ENCODE measurements at regions of chr20 and their contacts with region 1.

Region 1: DNA sequence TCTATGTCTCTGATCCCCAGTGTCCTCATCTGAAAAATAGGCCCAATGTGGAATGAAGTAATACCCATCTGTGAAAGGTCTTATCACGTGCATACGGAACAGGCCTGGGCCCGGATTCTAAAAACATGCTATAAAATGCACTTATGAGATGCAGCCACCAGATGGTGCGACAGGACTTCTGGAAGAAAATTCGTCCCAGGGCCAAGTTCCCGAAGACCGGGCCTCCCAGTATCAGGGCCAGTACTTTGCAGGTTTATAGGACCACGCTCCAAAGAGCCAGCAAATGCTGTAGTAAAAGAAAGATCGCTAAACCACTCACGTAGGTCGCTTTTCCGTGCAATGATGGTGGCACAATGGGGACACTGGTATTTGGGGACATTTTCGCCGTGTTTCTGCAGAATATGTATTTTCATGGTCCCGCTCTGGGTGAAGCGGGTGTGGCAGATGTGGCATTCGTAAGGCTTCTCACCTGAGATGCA is 10.6 kb downstream of the CTCFL start:
- DNase-seq: peak; percentile 67
- H3K4me3 Mint-ChIP-seq: no peak overlapping the region
- H3K27ac Mint-ChIP-seq: no peak overlapping the region
- H3K4me1 Mint-ChIP-seq: no peaks in the 10 kb centered on the region
- H3K27me3 Mint-ChIP-seq: peaks cover 30% of the 10 kb centered on the region
- CTCF ChIP-seq: peak; percentile 79

Region 2: GRCh38 chr20:57582432-57583305 is 68.4 kb after region 1 on chr20:
- CTCF ChIA-PET with region 1: interaction called, 12 read pairs
- POLR2A ChIA-PET with region 1: no interaction called
- intact Hi-C with region 1: no loop called
- DNase-seq: no peak
- H3K4me3 Mint-ChIP-seq: no peak overlapping the region
- H3K27ac Mint-ChIP-seq: no peak overlapping the region
- H3K4me1 Mint-ChIP-seq: no peaks in the 10 kb centered on the region
- H3K27me3 Mint-ChIP-seq: peaks cover 85% of the 10 kb centered on the region
- CTCF ChIP-seq: no peak

Region 3: GRCh38 chr20:58065508-58066361 is 551.4 kb after region 1 on chr20:
- CTCF ChIA-PET with region 1: no interaction called
- POLR2A ChIA-PET with region 1: no interaction called
- intact Hi-C with region 1: no loop called
- DNase-seq: peak; percentile 44
- H3K4me3 Mint-ChIP-seq: no peak overlapping the region
- H3K27ac Mint-ChIP-seq: no peak overlapping the region
- H3K4me1 Mint-ChIP-seq: no peaks in the 10 kb centered on the region
- H3K27me3 Mint-ChIP-seq: peaks cover 55% of the 10 kb centered on the region
- CTCF ChIP-seq: no peak

Measured in MCF 10A (cell line).